Activated CD4-positive, alpha-beta T cell treated with anti-CD3 and anti-CD28 coated beads for 36 hours (primary cell): ENCODE measurements at regions of chr16 and their contacts with region 1.

Region 1: GRCh38 chr16:6897876-6898485 is 434.7 kb upstream of the RBFOX1 start:
- DNase-seq: no peak
- ATAC-seq: no peak
- H3K4me3 Mint-ChIP-seq: no peak overlapping the region
- H3K27ac Mint-ChIP-seq: no peak overlapping the region
- H3K4me1 Mint-ChIP-seq: no peaks in the 10 kb centered on the region
- H3K27me3 Mint-ChIP-seq: no peaks in the 10 kb centered on the region

Region 2: GRCh38 chr16:6884002-6884401 is 14.0 kb before region 1 on chr16:
- CTCF ChIA-PET with region 1: interaction called, 4 read pairs
- POLR2A ChIA-PET with region 1: no interaction called
- intact Hi-C with region 1: loop called in 1 of 2 experiments (anchors 2 kb)
- DNase-seq: no peak
- ATAC-seq: no peak
- H3K4me3 Mint-ChIP-seq: no peak overlapping the region
- H3K27ac Mint-ChIP-seq: no peak overlapping the region
- H3K4me1 Mint-ChIP-seq: no peaks in the 10 kb centered on the region
- H3K27me3 Mint-ChIP-seq: no peaks in the 10 kb centered on the region